ENCODE measurements at regions of chr4 and their contacts with region 1.

Region 1: DNA sequence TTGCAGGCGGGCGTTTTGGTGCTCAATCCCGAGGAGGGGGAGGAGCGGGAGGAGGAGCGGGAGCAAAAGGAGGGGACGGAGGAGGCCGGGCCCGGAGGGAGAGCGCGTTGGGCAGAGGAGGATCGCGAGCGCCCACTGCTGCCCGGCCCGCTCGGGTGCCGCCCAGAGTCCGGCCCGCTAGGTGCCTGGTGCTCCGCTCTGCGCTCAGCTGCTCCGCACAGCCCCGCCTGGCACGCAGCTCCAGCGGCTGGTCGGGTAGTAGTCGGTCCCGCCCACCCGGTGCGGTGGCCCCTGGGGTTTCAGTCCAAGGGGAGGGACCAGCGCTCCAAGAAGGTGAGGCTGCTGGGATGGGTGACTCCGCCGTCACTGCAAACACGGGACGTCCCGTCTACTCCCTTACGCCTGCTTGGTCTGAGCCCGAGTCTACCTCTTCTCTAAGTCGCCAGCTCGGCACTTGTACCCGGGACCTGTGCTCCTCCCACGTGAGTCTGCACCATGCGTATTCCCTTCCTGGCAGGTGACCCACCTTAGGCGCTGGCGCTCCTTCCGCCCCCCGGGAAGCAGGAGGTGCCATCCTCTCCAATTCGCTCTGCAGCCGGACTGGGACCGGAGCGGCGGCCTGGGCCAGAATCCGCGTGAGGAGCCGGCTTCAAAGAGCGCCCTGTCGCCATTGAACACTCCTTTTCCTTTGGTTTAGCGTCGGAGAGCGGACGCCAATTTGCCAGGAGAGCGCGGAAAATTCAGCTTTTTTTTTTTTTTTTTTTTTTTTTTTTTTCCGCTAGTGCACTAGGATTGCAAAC is 405 bp upstream of the HS3ST1 start:
- DNase-seq: peak; percentile 80 to 90 (median 83)
- ATAC-seq: peak; percentile 81 to 98 (median 96)
- H3K4me3 ChIP-seq: peak overlapping the region; percentile 32 to 75 (median 64)
- H3K27ac ChIP-seq: peak overlapping the region in 8 of 12 donors; percentile 5 to 55 (median 31)
- H3K4me1 ChIP-seq: peaks cover 0 to 27% (median 18%) of the 10 kb centered on the region in 12 donors
- H3K27me3 ChIP-seq: peaks cover 0 to 24% (median 12%) of the 10 kb centered on the region in 9 donors
- CTCF ChIP-seq: peak; percentile 48 to 84 (median 64)
- POLR2A ChIP-seq: no peak

Region 2: GRCh38 chr4:10582059-10582686 is 846.9 kb before region 1 on chr4:
- intact Hi-C with region 1: loop called in 8 of 10 experiments (anchors 5 to 10 kb)
- DNase-seq: peak in 3 of 5 donors; percentile 23 to 30 (median 23)
- ATAC-seq: peak in 2 of 4 donors; percentile 58
- H3K4me3 ChIP-seq: no peak overlapping the region
- H3K27ac ChIP-seq: no peak overlapping the region
- H3K4me1 ChIP-seq: peaks cover 0 to 11% (median 0%) of the 10 kb centered on the region in 12 donors
- H3K27me3 ChIP-seq: peaks cover 0 to 10% (median 0%) of the 10 kb centered on the region in 9 donors
- CTCF ChIP-seq: peak; percentile 57 to 87 (median 77)
- POLR2A ChIP-seq: no peak

Region 3: DNA sequence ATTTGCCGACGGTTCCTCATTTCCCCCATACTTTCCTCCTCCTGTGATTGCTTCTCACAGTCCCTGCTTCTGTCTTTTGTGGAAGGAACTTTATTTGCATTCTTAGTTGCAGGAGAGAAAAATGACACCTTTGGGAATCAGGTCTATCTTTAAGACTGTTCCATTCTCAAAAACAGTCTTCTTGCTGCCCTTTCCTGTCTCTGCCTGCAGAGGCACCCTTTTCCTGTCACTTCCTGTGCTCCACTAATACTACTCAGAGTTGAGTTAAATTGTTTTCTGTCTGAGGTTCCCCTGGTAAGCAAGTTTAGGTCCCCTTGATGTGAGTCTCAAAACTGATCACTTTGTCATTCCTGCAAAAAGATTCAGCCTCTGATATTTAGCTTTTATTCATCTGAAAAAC is 535.7 kb before region 1 on chr4:
- intact Hi-C with region 1: loop called in 1 of 10 experiments (anchors 10 kb)
- DNase-seq: no peak
- ATAC-seq: no peak
- H3K4me3 ChIP-seq: no peak overlapping the region
- H3K27ac ChIP-seq: no peak overlapping the region
- H3K4me1 ChIP-seq: no peaks in the 10 kb centered on the region
- H3K27me3 ChIP-seq: peaks cover 0 to 4% (median 0%) of the 10 kb centered on the region in 9 donors
- CTCF ChIP-seq: peak in 7 of 12 donors; percentile 8 to 44 (median 33)
- POLR2A ChIP-seq: no peak

Region 4: GRCh38 chr4:11663114-11663513 is 234.0 kb after region 1 on chr4:
- intact Hi-C with region 1: no loop called
- DNase-seq: no peak
- ATAC-seq: no peak
- H3K4me3 ChIP-seq: no peak overlapping the region
- H3K27ac ChIP-seq: no peak overlapping the region
- H3K4me1 ChIP-seq: no peaks in the 10 kb centered on the region
- H3K27me3 ChIP-seq: no peaks in the 10 kb centered on the region
- CTCF ChIP-seq: no peak
- POLR2A ChIP-seq: no peak

Region 5: GRCh38 chr4:11691236-11691635 is 262.1 kb after region 1 on chr4:
- intact Hi-C with region 1: no loop called
- DNase-seq: no peak
- ATAC-seq: no peak
- H3K4me3 ChIP-seq: no peak overlapping the region
- H3K27ac ChIP-seq: no peak overlapping the region
- H3K4me1 ChIP-seq: peaks cover 0 to 4% (median 0%) of the 10 kb centered on the region in 12 donors
- H3K27me3 ChIP-seq: no peaks in the 10 kb centered on the region
- CTCF ChIP-seq: no peak
- POLR2A ChIP-seq: no peak

Region 6: DNA sequence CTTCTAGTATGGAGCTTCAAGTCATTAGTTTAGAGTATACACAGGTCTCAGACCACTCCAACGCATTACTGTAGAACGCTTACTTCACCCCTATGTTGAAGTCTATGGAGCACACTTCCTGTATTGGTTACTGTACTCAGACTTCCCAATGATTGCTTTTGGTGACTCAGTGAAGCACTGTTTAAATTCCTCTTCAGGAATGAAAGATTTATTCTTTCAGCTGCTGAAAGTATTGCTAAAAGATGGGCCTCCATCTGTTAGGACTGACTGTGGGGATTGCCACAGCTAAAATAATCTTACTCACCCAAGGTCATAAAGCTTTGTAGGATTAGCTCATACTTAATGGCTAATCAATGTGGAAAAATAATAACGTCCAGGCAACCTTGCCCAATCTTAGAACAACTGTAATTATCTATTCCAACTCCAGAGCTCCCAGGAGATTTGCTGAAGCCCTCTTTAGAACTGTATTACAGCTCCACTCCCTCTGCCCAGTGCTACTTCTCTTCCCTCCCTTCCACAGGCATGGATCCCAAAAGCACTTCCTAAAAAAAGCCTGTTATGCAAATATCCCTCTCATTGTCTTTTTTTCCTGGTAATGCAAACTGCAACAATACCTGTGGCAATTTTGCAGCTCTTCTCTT is 281.5 kb after region 1 on chr4:
- intact Hi-C with region 1: loop called in 1 of 10 experiments (anchors 10 kb)
- DNase-seq: no peak
- ATAC-seq: no peak
- H3K4me3 ChIP-seq: no peak overlapping the region
- H3K27ac ChIP-seq: no peak overlapping the region
- H3K4me1 ChIP-seq: peaks cover 0 to 4% (median 0%) of the 10 kb centered on the region in 12 donors
- H3K27me3 ChIP-seq: no peaks in the 10 kb centered on the region
- CTCF ChIP-seq: no peak
- POLR2A ChIP-seq: no peak

Measured in heart left ventricle (tissue), 16 donors.